ENCODE measurements at regions of chr2 and their contacts with region 1.

Region 1: GRCh38 chr2:32904074-32904473 is 42.7 kb upstream of the LTBP1 start:
- DNase-seq: no peak
- H3K4me3 ChIP-seq: no peak overlapping the region
- H3K27ac ChIP-seq: no peak overlapping the region
- H3K4me1 ChIP-seq: no peaks in the 10 kb centered on the region
- H3K27me3 ChIP-seq: peaks cover 9% of the 10 kb centered on the region
- CTCF ChIP-seq: no peak

Region 2: DNA sequence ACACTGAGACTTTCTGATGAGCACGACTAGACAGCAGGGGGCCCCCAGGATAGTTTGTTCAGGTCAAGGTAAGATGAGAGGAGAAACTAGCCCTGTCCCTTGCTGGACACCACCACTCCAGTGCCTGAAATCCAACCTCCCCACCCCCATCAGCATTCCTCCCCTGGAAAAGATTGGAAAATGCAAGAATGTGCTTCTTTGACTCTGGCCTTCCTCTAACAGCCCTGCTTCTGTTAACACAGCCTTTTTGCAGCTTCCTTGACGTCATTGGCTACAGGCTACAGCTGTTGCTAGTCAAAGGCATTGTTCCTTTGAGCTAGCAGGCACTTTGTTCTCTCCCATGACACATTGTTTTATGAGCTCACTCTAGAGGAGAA is 22.6 kb after region 1 on chr2:
- CTCF ChIA-PET with region 1: no interaction called
- POLR2A ChIA-PET with region 1: interaction called, 13 read pairs
- intact Hi-C with region 1: no loop called
- DNase-seq: peak; percentile 12
- H3K4me3 ChIP-seq: no peak overlapping the region
- H3K27ac ChIP-seq: no peak overlapping the region
- H3K4me1 ChIP-seq: no peaks in the 10 kb centered on the region
- H3K27me3 ChIP-seq: peaks cover 8% of the 10 kb centered on the region
- CTCF ChIP-seq: no peak

Region 3: GRCh38 chr2:33406622-33407021 is 502.5 kb after region 1 on chr2:
- CTCF ChIA-PET with region 1: no interaction called
- POLR2A ChIA-PET with region 1: no interaction called
- intact Hi-C with region 1: no loop called
- DNase-seq: no peak
- H3K4me3 ChIP-seq: no peak overlapping the region
- H3K27ac ChIP-seq: no peak overlapping the region
- H3K4me1 ChIP-seq: no peaks in the 10 kb centered on the region
- H3K27me3 ChIP-seq: no peaks in the 10 kb centered on the region
- CTCF ChIP-seq: no peak

Measured in A673 (cell line).